ENCODE measurements at regions of chr7 and their contacts with region 1.

Region 1: DNA sequence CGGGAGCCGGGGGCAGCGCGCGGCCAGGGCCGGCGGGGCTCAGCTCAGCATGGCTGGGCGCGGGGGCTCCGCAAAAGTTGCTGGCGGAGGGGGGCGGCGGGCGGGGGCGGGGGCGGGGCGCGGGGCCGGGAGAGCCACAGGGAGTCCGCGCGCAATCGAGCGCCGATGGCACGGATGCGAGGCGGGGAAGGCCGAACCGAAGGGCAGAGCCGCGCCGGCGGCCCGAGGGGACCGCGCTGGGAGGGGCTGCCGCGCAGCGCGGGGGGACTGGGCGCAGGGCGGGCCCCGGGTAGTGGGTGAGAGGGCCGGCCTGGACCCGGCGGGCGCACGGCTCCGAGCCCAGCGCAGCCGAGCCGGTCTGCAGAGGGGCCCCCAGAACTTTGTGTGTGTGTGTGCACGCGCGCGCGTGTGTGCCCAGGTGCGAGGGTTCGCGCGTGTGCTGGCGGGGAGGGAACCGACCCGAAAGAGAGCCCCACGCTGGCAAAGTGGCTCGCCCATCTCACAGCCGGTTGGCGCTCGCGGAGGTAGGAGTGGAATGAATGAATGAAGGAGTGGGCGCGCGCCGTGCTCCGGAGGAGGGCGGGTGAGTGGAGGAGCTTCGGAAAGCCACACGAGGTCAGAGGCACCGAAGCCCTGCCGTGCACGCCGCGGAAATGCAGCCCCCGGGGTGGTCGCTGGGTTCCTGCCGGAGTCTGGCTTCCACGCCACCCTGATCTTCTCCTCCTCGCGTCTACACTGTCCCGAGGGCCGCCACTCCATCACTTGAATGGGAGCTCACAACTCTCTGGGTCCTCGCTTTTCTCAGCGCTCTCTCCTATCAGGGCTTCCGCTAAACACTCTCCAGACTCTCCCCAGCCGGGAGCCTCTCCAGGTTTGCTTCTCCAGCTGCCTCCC is at the start of gene HIPK2:
- DNase-seq: peak; percentile 68
- H3K4me3 Mint-ChIP-seq: peak within 1 kb of the TSS; percentile 96
- H3K27ac Mint-ChIP-seq: peak within 1 kb of the TSS; percentile 84
- H3K4me1 Mint-ChIP-seq: peaks cover 36% of the 10 kb centered on the region
- H3K27me3 Mint-ChIP-seq: peaks cover 14% of the 10 kb centered on the region
- total RNA-seq, gene HIPK2: 16.8 to 17.3 TPM

Region 2: DNA sequence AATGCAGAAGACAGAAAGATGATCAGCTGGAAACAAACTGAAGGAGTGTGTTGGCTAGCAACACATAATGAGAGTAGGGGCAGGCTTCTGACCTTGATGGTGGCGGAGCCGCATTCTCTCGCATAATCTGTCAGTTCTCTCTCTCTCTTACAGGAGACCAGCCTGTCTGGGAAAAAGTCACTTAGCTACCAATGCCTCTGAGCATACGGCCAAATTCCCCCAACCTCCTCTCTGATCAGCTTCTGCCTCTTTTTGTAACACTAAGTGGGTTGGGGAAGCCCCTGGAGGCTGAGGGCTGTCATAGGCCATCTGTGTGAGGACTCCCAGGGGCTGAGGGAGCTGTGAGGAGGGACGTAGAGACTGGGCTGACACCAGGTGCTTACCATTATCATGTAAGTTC is 105.0 kb before region 1 on chr7:
- CTCF ChIA-PET with region 1: no interaction called
- intact Hi-C with region 1: loop called (anchors 1 kb)
- DNase-seq: peak; percentile 81
- H3K4me3 Mint-ChIP-seq: peak overlapping the region; percentile 35
- H3K27ac Mint-ChIP-seq: peak overlapping the region; percentile 85
- H3K4me1 Mint-ChIP-seq: peaks cover 28% of the 10 kb centered on the region
- H3K27me3 Mint-ChIP-seq: no peaks in the 10 kb centered on the region

Region 3: GRCh38 chr7:139737221-139738100 is 40.7 kb before region 1 on chr7:
- CTCF ChIA-PET with region 1: interaction called, 3 read pairs
- intact Hi-C with region 1: loop called (anchors 1 kb)
- DNase-seq: peak; percentile 74
- H3K4me3 Mint-ChIP-seq: peak overlapping the region; percentile 38
- H3K27ac Mint-ChIP-seq: peak overlapping the region; percentile 84
- H3K4me1 Mint-ChIP-seq: peaks cover 55% of the 10 kb centered on the region
- H3K27me3 Mint-ChIP-seq: no peaks in the 10 kb centered on the region

Region 4: DNA sequence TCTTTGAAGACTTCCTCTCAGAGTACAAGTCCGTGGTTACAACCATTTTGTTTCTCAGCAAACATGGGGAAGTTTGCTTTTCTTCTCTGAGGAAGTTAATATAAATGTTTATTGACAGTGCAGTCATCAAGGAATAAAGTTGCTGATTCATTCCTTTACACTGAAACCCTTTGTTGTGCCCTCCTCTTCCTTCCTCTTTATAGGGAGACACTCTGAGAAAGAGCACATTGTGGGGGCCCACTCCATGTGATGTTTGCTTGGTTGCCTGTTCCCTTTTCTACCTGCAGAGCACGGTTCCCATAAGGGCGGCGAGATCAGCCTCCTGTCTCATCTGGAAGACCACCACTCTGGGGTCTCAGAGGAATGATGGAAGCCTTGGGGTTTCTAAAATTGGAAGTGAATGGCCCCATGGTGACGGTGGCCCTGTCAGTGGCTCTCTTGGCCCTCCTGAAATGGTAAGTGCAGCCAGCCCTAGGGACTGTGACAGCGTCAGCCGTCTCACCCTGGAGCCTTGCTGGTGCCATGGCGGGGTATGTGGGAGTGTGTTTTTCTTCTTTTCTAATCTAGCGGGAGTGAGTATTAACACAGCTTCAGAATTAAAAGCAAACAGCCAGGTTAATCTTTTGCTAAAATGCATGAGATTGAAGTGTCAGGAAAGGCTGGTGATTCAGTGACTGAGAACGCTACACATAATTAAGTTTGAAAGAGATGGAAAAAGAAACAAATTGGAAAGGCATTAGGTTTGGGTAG is 51.0 kb after region 1 on chr7 and contains the start of gene TBXAS1:
- CTCF ChIA-PET with region 1: no interaction called
- intact Hi-C with region 1: loop called (anchors 2 kb)
- DNase-seq: peak; percentile 14
- H3K4me3 Mint-ChIP-seq: peak within 1 kb of the TSS; percentile 50
- H3K27ac Mint-ChIP-seq: peak within 1 kb of the TSS; percentile 77
- H3K4me1 Mint-ChIP-seq: peaks cover 24% of the 10 kb centered on the region
- H3K27me3 Mint-ChIP-seq: peaks cover 4% of the 10 kb centered on the region
- total RNA-seq, gene TBXAS1: 0.83 to 1.1 TPM

Measured in activated naive CD4-positive, alpha-beta T cell treated with anti-CD3 and anti-CD28 coated beads for 36 hours (primary cell).